ENCODE measurements at regions of chr10 and their contacts with region 1.

Region 1: GRCh38 chr10:97572214-97572989 is at the start of gene ANKRD2:
- DNase-seq: peak; percentile 81 to 84
- H3K4me3 ChIP-seq: no peak within 1 kb of the TSS
- H3K4me3 Mint-ChIP-seq: no peak within 1 kb of the TSS
- H3K27ac Mint-ChIP-seq: peak within 1 kb of the TSS; percentile 82
- H3K4me1 ChIP-seq: peaks cover 33% of the 10 kb centered on the region
- H3K4me1 Mint-ChIP-seq: peaks cover 24% of the 10 kb centered on the region
- H3K27me3 ChIP-seq: no peaks in the 10 kb centered on the region
- H3K27me3 Mint-ChIP-seq: no peaks in the 10 kb centered on the region
- CTCF ChIP-seq: peak; percentile 66 to 94
- total RNA-seq, gene ANKRD2: 0.23 TPM in 1 of 2 replicates, not detected in the other

Region 2: DNA sequence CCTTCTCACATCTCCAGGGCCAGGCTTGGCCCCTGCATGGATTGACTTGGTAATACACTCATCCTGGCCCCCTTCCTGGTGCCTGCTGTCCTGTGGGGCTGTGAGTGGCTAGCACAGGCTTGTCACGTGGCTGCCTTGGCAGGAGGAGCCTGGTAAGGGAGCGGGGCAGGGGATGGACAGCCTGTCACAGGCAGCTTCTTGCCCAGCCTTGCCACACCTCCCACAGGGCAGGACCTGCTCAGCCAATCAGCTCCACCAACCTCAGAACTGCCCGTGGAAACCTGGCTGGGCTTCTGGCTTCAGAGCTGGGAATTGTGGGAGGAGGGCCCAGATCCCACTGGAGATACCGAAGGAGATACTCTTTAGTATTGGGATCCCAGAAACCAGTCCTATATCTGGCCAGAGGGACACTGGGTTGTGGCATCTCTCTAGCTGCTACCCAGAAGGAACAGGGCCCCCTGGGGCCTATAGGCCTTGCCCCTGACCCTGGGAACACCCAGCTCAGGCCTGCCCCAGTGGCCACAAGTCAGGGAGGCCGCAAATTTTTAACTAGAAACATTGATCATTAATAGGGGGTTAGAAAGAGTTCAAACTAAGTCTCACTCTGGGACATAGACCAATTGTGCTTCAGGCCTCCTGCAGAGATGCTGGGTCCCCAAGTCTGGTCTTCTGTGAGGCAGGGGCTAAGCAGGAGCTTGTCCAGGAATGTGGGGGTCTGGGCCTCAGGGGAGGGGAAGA is 11.8 kb after region 1 on chr10 and contains the start of gene HOGA1:
- CTCF ChIA-PET with region 1: interaction called, 15 read pairs
- POLR2A ChIA-PET with region 1: no interaction called
- intact Hi-C with region 1: no loop called
- DNase-seq: peak; percentile 28 to 62
- H3K4me3 ChIP-seq: no peak within 1 kb of the TSS
- H3K4me3 Mint-ChIP-seq: no peak within 1 kb of the TSS
- H3K27ac Mint-ChIP-seq: peak within 1 kb of the TSS; percentile 21
- H3K4me1 ChIP-seq: peaks cover 25% of the 10 kb centered on the region
- H3K4me1 Mint-ChIP-seq: peaks cover 10% of the 10 kb centered on the region
- H3K27me3 ChIP-seq: no peaks in the 10 kb centered on the region
- H3K27me3 Mint-ChIP-seq: no peaks in the 10 kb centered on the region
- CTCF ChIP-seq: no peak
- total RNA-seq, gene HOGA1: 0.50 and 0.67 TPM in 2 replicates

Region 3: DNA sequence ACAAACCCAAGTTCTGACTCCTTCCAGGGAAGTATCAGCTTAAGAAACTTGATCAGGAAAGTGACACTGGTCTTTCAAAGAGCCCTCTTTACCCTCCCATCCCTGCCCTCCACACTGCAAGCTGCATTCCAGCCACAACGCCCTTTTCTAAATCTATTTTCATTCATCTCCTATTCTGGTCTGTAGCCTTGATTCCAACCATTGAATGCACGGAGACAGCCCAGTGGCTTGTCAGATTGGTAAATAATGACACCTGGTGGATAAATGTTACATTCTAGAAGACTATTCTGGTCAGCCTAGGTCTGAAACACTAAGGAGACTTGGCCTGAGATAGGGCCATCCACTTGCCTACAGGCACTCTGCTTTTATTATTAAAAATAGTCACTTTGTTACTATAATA is 40.0 kb after region 1 on chr10:
- CTCF ChIA-PET with region 1: interaction called, 39 read pairs
- POLR2A ChIA-PET with region 1: no interaction called
- intact Hi-C with region 1: loop called (anchors 1 kb)
- DNase-seq: peak in 1 of 2 experiments; percentile 55
- H3K4me3 ChIP-seq: no peak overlapping the region
- H3K4me3 Mint-ChIP-seq: no peak overlapping the region
- H3K27ac Mint-ChIP-seq: no peak overlapping the region
- H3K4me1 ChIP-seq: no peaks in the 10 kb centered on the region
- H3K4me1 Mint-ChIP-seq: no peaks in the 10 kb centered on the region
- H3K27me3 ChIP-seq: no peaks in the 10 kb centered on the region
- H3K27me3 Mint-ChIP-seq: no peaks in the 10 kb centered on the region
- CTCF ChIP-seq: peak; percentile 44 to 52